ENCODE measurements at regions of chr20 and their contacts with region 1.

Region 1: GRCh38 chr20:40990542-40991120 is 38.0 kb upstream of the TOP1 start:
- DNase-seq: peak; percentile 79 to 92 (median 84)
- ATAC-seq: peak; percentile 97 to 99
- H3K4me3 ChIP-seq: no peak overlapping the region
- H3K27ac ChIP-seq: no peak overlapping the region
- H3K4me1 ChIP-seq: no peaks in the 10 kb centered on the region
- H3K27me3 ChIP-seq: no peaks in the 10 kb centered on the region

Region 2: DNA sequence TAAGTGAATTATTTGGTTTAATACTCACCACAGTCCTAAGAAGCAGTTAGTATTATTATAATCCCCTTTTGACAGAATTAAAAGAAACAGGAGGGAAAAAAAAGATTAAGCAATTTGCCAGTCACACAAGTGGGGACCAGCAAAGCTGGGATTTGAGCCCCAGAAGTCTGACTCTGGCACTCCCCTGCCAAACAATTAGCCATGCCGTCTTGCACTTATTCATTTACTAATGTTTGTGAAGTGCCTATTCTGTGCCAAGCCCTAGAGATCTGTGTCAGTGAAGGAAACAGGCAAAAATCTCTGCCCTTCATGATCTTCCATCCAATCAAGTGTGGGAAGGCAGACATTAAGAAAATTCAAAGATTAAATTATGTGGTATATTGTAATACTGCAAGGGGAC is 88.0 kb before region 1 on chr20:
- intact Hi-C with region 1: no loop called
- DNase-seq: no peak
- ATAC-seq: no peak
- H3K4me3 ChIP-seq: no peak overlapping the region
- H3K27ac ChIP-seq: no peak overlapping the region
- H3K4me1 ChIP-seq: no peaks in the 10 kb centered on the region
- H3K27me3 ChIP-seq: no peaks in the 10 kb centered on the region

Region 3: DNA sequence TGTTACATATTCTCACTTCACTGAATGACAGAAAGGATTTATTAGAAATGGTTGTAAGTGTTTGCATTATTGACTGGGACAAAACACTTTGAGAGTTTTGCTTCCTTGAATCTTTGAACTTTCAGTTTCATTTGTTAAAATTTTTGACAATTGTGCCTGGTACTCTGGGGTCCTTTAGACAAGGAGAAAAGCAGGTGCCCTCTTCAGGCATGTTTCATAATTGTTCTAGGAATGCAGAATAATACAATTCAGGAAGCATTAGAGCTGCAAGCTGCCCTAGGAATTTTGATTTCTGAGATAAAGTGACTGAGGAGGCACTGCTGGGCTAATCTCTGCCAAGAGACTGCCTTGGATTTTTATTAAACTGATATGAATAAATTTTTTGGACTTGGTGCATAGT is 87.7 kb after region 1 on chr20:
- intact Hi-C with region 1: loop called in 1 of 4 experiments (anchors 5 kb)
- DNase-seq: no peak
- ATAC-seq: peak; percentile 77 to 79
- H3K4me3 ChIP-seq: peak overlapping the region; percentile 25
- H3K27ac ChIP-seq: no peak overlapping the region
- H3K4me1 ChIP-seq: peaks cover 2% of the 10 kb centered on the region
- H3K27me3 ChIP-seq: no peaks in the 10 kb centered on the region

Region 4: GRCh38 chr20:41095110-41095969 is 104.7 kb after region 1 on chr20:
- intact Hi-C with region 1: loop called in 3 of 4 experiments (anchors 2 to 5 kb)
- DNase-seq: peak; percentile 46 to 75 (median 67)
- ATAC-seq: peak; percentile 67 to 80
- H3K4me3 ChIP-seq: no peak overlapping the region
- H3K27ac ChIP-seq: no peak overlapping the region
- H3K4me1 ChIP-seq: no peaks in the 10 kb centered on the region
- H3K27me3 ChIP-seq: no peaks in the 10 kb centered on the region